Activated CD4-positive, alpha-beta memory T cell treated with anti-CD3 and anti-CD28 coated beads, Interleukin-2, amount 10 ng/mL, durations not matched to agents 7 days and 5 days (primary cell): ENCODE measurements at regions of chr12 and their contacts with region 1.

Region 1: GRCh38 chr12:123905319-123905925 is 67.2 kb downstream of the CCDC92 start:
- DNase-seq: peak; percentile 67
- H3K4me3 Mint-ChIP-seq: no peak overlapping the region
- H3K27ac Mint-ChIP-seq: no peak overlapping the region
- H3K4me1 Mint-ChIP-seq: peaks cover 1% of the 10 kb centered on the region
- H3K27me3 Mint-ChIP-seq: peaks cover 9% of the 10 kb centered on the region

Region 2: DNA sequence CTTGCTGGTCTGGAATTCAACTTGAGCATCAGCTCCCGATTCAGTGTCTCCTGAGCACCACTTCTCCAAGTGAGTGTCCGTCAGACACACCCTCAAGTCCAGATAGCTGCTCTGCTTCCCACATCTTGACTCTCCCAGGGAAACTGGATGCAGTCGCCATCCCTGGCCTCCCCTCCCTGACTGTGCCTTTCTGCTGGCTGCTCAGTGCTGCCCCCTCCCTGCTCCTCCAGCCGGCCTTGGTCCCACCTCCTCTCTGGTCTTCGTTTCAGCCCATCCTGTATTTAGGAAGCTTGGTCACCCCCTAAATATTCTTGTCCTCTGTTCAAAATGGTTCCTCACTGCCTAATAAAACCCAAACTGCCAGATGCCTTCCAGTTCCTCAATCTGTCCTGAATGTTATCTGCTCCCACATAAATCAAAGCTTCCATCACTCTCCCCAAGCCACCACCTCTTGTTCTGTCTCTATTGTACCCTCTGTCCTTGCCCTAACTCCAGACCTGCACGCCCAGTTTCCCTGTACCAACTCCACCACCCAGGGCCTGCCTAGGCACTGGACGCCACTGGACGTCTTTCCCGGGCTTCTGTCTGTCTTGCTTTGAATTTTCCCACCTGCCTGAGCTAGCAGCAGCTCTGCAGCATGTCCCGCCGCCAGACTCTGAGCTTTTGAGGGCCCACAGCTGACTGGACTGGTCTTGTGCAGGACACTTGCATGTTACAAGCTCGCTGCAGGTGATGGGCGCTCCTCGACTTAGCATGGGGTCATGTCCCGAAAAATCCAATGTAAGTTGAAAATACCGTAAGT is 33.5 kb after region 1 on chr12:
- CTCF ChIA-PET with region 1: interaction called, 11 read pairs
- POLR2A ChIA-PET with region 1: no interaction called
- DNase-seq: no peak
- H3K4me3 Mint-ChIP-seq: peak overlapping the region; percentile 65
- H3K27ac Mint-ChIP-seq: peak overlapping the region; percentile 68
- H3K4me1 Mint-ChIP-seq: peaks cover 25% of the 10 kb centered on the region
- H3K27me3 Mint-ChIP-seq: no peaks in the 10 kb centered on the region

Region 3: GRCh38 chr12:123948796-123949769 is 43.7 kb after region 1 on chr12:
- CTCF ChIA-PET with region 1: no interaction called
- POLR2A ChIA-PET with region 1: no interaction called
- DNase-seq: no peak
- H3K4me3 Mint-ChIP-seq: no peak overlapping the region
- H3K27ac Mint-ChIP-seq: no peak overlapping the region
- H3K4me1 Mint-ChIP-seq: no peaks in the 10 kb centered on the region
- H3K27me3 Mint-ChIP-seq: no peaks in the 10 kb centered on the region

Region 4: DNA sequence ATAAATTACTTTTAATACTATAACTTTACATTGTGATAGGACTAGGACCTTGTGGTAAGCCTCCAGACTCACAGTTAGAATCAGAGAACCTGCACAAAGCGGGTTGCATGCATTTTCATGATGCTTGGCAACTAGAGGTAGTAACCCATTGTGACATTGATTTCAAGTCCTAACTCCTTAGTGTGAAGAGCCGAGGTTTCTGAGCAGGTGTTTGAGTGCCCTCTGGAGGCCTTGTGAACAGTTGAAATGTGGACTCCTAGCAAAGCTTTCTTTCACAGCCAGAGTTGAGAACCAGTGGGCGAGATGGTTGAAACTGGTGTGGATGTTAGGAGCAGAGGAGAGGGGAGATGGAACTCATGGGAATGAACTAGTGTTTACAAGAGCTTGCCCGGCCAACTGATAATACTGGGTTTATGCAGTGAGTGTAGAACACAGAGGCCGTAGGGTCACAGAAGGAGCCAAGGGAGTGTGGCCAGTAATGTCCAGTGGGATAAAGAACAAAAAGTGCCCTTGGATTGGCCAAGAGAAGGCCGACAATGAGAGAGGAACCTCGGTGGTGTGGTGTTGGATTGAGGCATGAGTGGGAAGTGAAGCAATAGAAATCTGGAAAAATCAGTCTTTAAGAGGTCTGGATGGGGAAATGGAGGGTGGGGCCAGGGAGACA is 78.5 kb after region 1 on chr12:
- CTCF ChIA-PET with region 1: interaction called, 59 read pairs
- POLR2A ChIA-PET with region 1: no interaction called
- DNase-seq: peak; percentile 55
- H3K4me3 Mint-ChIP-seq: no peak overlapping the region
- H3K27ac Mint-ChIP-seq: no peak overlapping the region
- H3K4me1 Mint-ChIP-seq: peaks cover 6% of the 10 kb centered on the region
- H3K27me3 Mint-ChIP-seq: no peaks in the 10 kb centered on the region

Region 5: GRCh38 chr12:124036674-124037109 is 131.3 kb after region 1 on chr12:
- CTCF ChIA-PET with region 1: interaction called, 17 read pairs
- POLR2A ChIA-PET with region 1: no interaction called
- DNase-seq: peak; percentile 39
- H3K4me3 Mint-ChIP-seq: no peak overlapping the region
- H3K27ac Mint-ChIP-seq: no peak overlapping the region
- H3K4me1 Mint-ChIP-seq: no peaks in the 10 kb centered on the region
- H3K27me3 Mint-ChIP-seq: peaks cover 13% of the 10 kb centered on the region

Region 6: GRCh38 chr12:124379938-124380754 is 474.7 kb after region 1 on chr12:
- CTCF ChIA-PET with region 1: no interaction called
- POLR2A ChIA-PET with region 1: no interaction called
- DNase-seq: no peak
- H3K4me3 Mint-ChIP-seq: no peak overlapping the region
- H3K27ac Mint-ChIP-seq: no peak overlapping the region
- H3K4me1 Mint-ChIP-seq: no peaks in the 10 kb centered on the region
- H3K27me3 Mint-ChIP-seq: no peaks in the 10 kb centered on the region